Right cardiac atrium (tissue), 5 donors: ENCODE measurements at regions of chr13 and their contacts with region 1.

Region 1: GRCh38 chr13:75760131-75761021 is 124.2 kb downstream of the LMO7 start:
- DNase-seq: no peak
- ATAC-seq: peak; percentile 70 to 76
- H3K4me3 ChIP-seq: peak overlapping the region; percentile 78
- H3K27ac ChIP-seq: peak overlapping the region; percentile 83
- H3K4me1 ChIP-seq: peaks cover 4% of the 10 kb centered on the region
- H3K27me3 ChIP-seq: no peaks in the 10 kb centered on the region

Region 2: GRCh38 chr13:75803164-75803611 is 42.8 kb after region 1 on chr13:
- intact Hi-C with region 1: loop called in 1 of 4 experiments (anchors 5 kb)
- DNase-seq: no peak
- ATAC-seq: peak in 1 of 2 donors; percentile 44
- H3K4me3 ChIP-seq: no peak overlapping the region
- H3K27ac ChIP-seq: peak overlapping the region; percentile 90
- H3K4me1 ChIP-seq: peaks cover 2% of the 10 kb centered on the region
- H3K27me3 ChIP-seq: no peaks in the 10 kb centered on the region